SK-N-SH (cell line): ENCODE measurements at regions of chr3 and their contacts with region 1.

Region 1: GRCh38 chr3:185983495-185984141 is 45.8 kb upstream of the TRA2B start:
- DNase-seq: peak; percentile 83
- H3K4me3 ChIP-seq: peak overlapping the region in 1 of 2 experiments; percentile 21; a peak in 1 of 4 replicates
- H3K27ac ChIP-seq: no peak overlapping the region
- H3K4me1 ChIP-seq: peaks cover 0 to 3% of the 10 kb centered on the region in 2 experiments; a peak in 1 of 4 replicates
- H3K27me3 ChIP-seq: no peaks in the 10 kb centered on the region
- CTCF ChIP-seq: peak; percentile 90
- EP300 ChIP-seq: no peak
- RAD21 ChIP-seq: peak; percentile 98

Region 2: DNA sequence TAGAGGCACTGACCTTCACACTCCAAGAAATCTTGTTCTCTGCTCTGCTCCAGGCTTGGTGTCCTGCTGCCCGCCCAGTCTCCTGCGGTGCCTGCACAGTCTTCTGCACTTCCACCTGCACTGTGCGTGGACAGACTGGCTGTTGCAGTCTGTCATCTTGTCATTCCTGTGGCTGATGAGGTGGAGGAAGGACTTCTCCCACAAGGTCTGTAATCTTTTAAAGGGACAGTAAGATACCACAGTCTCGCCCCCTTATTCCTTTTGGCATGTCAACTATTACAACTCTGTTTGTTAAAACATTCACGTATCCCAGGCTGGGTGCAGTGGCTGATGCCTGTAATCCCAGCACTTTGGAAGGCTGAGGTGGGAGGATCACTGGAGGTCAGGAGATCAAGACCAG is 104.7 kb before region 1 on chr3:
- CTCF ChIA-PET with region 1: no interaction called
- POLR2A ChIA-PET with region 1: no interaction called
- DNase-seq: no peak
- H3K4me3 ChIP-seq: no peak overlapping the region
- H3K27ac ChIP-seq: no peak overlapping the region
- H3K4me1 ChIP-seq: no peaks in the 10 kb centered on the region
- H3K27me3 ChIP-seq: no peaks in the 10 kb centered on the region
- CTCF ChIP-seq: no peak
- EP300 ChIP-seq: no peak
- RAD21 ChIP-seq: no peak

Region 3: GRCh38 chr3:186246941-186247340 is 263.3 kb after region 1 on chr3:
- CTCF ChIA-PET with region 1: interaction called, 14 read pairs
- POLR2A ChIA-PET with region 1: no interaction called
- DNase-seq: no peak
- H3K4me3 ChIP-seq: no peak overlapping the region
- H3K27ac ChIP-seq: no peak overlapping the region
- H3K4me1 ChIP-seq: peaks cover 4 to 5% of the 10 kb centered on the region in 2 experiments; a peak in 2 of 4 replicates
- H3K27me3 ChIP-seq: no peaks in the 10 kb centered on the region; the same call in 1 of the 2 replicates
- CTCF ChIP-seq: no peak
- EP300 ChIP-seq: no peak
- RAD21 ChIP-seq: no peak

Region 4: DNA sequence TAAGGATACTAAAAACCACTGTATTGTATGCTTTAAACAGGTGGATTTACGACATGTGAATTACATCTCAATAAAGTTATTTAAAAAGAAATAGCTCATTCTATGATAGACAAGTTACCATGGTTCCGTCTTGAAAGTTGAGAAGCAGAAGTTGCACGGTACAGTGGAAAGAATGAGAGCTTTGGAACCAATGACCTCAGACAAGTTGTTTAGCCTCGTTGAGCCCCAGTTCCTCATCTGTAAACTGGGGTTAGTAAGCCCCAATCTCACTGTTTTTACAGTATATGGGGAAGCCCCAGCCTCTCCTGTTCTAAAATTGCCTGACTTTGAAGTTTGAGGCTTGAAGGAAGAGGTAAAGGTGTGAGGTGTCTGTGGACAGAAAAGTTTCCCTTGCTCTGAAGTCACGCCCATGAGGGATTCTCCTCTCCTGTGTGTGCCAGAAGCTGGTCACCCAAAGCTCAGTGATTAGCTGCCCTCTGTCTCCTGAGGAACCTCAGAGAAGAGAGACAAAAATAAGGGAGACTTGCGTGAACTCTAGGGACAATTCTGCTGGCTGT is 550.6 kb after region 1 on chr3:
- CTCF ChIA-PET with region 1: interaction called, 70 read pairs
- POLR2A ChIA-PET with region 1: no interaction called
- DNase-seq: no peak
- H3K4me3 ChIP-seq: no peak overlapping the region
- H3K27ac ChIP-seq: no peak overlapping the region
- H3K4me1 ChIP-seq: peaks cover 4 to 16% of the 10 kb centered on the region in 2 experiments
- H3K27me3 ChIP-seq: no peaks in the 10 kb centered on the region
- CTCF ChIP-seq: no peak
- EP300 ChIP-seq: no peak
- RAD21 ChIP-seq: no peak